K562 (cell line): ENCODE measurements at regions of chr1 and their contacts with region 1.

Region 1: GRCh38 chr1:28282426-28283407 is 23.4 kb downstream of the SESN2 start:
- DNase-seq: peak in 2 of 4 experiments; percentile 9 to 16
- ATAC-seq: peak; percentile 49
- H3K4me3 ChIP-seq: no peak overlapping the region
- H3K27ac ChIP-seq: no peak overlapping the region
- H3K4me1 ChIP-seq: peaks cover 11 to 17% of the 10 kb centered on the region in 2 experiments; a peak in 4 of 5 replicates
- H3K27me3 ChIP-seq: no peaks in the 10 kb centered on the region
- CTCF ChIP-seq: peak in 2 of 3 experiments; percentile 10 to 22; a peak in 2 of 6 replicates
- EP300 ChIP-seq: no peak
- POLR2A ChIP-seq: peak; percentile 27; the same call in 1 of the 2 replicates
- RAD21 ChIP-seq: no peak

Region 2: GRCh38 chr1:28259307-28260167 is 23.2 kb before region 1 on chr1 and contains the start of gene SESN2:
- CTCF ChIA-PET with region 1: no interaction called
- POLR2A ChIA-PET with region 1: interaction called, 547 read pairs
- in situ Hi-C with region 1: no loop called
- intact Hi-C with region 1: no loop called
- DNase-seq: peak; percentile 99 to 100 (median 100)
- ATAC-seq: peak; percentile 92
- H3K4me3 ChIP-seq: peak within 1 kb of the TSS; percentile 96
- H3K27ac ChIP-seq: peak within 1 kb of the TSS; percentile 90
- H3K4me1 ChIP-seq: peaks cover 52 to 64% of the 10 kb centered on the region in 2 experiments
- H3K27me3 ChIP-seq: no peaks in the 10 kb centered on the region
- CTCF ChIP-seq: no peak; a peak in 1 of 6 replicates
- EP300 ChIP-seq: no peak
- POLR2A ChIP-seq: peak; percentile 99
- RAD21 ChIP-seq: peak in 1 of 2 experiments; percentile 31; a peak in 1 of 4 replicates
- polyA plus RNA-seq, gene SESN2: 3.7 to 5.4 TPM

Region 3: GRCh38 chr1:28296401-28297261 is 13.9 kb after region 1 on chr1:
- CTCF ChIA-PET with region 1: no interaction called
- POLR2A ChIA-PET with region 1: interaction called, 26 read pairs
- in situ Hi-C with region 1: no loop called
- intact Hi-C with region 1: no loop called
- DNase-seq: peak; percentile 34 to 71 (median 58)
- ATAC-seq: peak; percentile 83
- H3K4me3 ChIP-seq: 0 out of 2 replicates have a peak overlapping the region, but pooled peaks have one; percentile 11
- H3K27ac ChIP-seq: no peak overlapping the region; the same call in 2 of the 3 replicates
- H3K4me1 ChIP-seq: peaks cover 11 to 17% of the 10 kb centered on the region in 2 experiments
- H3K27me3 ChIP-seq: no peaks in the 10 kb centered on the region
- CTCF ChIP-seq: no peak
- EP300 ChIP-seq: no peak
- POLR2A ChIP-seq: no peak
- RAD21 ChIP-seq: no peak

Region 4: DNA sequence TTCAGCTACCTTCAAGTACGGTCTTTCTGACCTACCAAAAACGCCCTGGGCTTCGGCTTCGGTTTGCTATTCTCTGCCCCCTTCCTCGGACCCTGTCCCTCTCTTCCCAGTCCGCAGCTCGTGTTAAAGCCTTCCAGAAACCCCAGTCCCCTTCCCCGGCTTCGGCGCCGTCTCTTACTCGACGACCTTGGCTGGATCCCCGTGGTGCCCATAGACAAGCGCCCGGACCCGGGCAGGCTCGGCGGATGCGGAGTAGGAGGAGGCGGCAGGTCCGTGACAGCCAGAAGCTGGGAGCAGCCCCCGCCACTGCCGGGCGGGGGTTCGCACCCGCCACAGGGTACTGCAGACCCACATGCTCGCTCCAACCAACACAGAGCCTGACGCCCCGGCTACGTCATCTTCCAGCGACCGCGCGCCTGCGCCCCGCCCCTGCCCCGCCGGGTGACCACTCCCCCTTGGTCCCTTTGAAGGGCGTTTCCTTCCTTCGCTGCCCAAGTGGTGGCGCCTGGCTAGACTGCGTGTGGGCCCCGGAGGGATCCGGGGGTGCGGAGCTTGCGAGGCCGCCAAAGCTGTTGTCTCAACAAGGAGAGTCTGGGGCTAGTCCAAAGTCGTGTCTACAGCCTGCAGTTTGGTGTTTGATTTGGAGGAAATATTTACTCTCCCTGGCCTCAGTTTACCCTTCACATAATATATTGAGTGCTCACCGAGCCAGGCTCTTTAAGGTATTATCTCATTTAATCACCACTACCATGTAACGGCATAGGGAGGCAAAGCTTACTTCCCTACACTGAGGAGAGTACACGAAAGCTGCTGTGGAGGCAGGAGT is 948.0 kb after region 1 on chr1 and contains the start of gene MECR:
- CTCF ChIA-PET with region 1: no interaction called
- POLR2A ChIA-PET with region 1: no interaction called
- in situ Hi-C with region 1: no loop called
- intact Hi-C with region 1: no loop called
- DNase-seq: peak; percentile 98 to 99 (median 99)
- ATAC-seq: peak; percentile 97
- H3K4me3 ChIP-seq: peak within 1 kb of the TSS; percentile 78
- H3K27ac ChIP-seq: peak within 1 kb of the TSS; percentile 75
- H3K4me1 ChIP-seq: peaks cover 7 to 12% of the 10 kb centered on the region in 2 experiments; a peak in 3 of 5 replicates
- H3K27me3 ChIP-seq: no peaks in the 10 kb centered on the region
- CTCF ChIP-seq: peak; percentile 42 to 58 (median 47)
- EP300 ChIP-seq: peak; percentile 3; the same call in 1 of the 2 replicates
- POLR2A ChIP-seq: peak; percentile 91
- RAD21 ChIP-seq: peak in 1 of 2 experiments; percentile 3; a peak in 1 of 4 replicates
- polyA plus RNA-seq, gene MECR: 10.4 to 18.0 TPM